ENCODE measurements at regions of chr17 and their contacts with region 1.

Region 1: DNA sequence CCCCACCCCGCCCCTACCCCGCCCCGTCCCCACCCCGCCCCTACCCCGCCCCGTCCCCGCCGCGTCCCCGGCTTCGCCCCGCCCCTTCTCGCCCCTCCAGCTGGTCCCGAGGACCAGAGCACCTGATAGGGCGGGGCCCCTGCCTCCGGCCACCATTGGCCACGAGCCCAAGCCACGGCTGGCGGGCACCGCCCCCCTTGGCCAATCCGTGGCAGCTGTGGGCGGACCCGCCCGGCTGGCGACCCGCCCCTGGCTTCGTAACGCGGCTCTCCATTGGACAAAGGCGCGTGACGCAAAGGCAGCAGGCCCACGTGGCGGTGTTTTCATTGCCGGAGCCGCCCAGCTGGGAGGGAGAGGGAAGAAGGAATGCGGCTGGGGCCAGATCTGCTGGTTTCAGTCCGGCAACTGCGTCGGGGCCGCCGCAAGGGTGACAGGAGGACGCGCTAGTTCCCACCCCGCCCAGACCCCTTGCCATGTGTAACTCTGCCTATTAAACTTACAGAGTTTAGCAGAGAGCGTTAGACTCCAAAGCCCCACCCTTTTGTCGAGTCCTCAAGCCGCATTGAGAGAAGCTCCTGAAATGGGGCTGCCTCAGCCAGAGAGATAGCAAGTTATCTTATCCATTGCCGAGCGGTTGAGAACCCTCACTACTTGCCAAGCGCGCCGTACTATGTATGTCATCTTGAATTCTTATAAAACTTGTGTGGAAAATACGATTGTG is 403 bp upstream of the WIPI1 start:
- DNase-seq: peak; percentile 97 to 99 (median 99)
- H3K4me3 ChIP-seq: peak overlapping the region; percentile 34 to 57
- H3K4me3 Mint-ChIP-seq: peak overlapping the region; percentile 76 to 92 (median 86)
- H3K27ac ChIP-seq: peak overlapping the region; percentile 64
- H3K27ac Mint-ChIP-seq: peak overlapping the region; percentile 85 to 97 (median 95)
- H3K4me1 ChIP-seq: peaks cover 60% of the 10 kb centered on the region
- H3K4me1 Mint-ChIP-seq: peaks cover 36 to 66% (median 49%) of the 10 kb centered on the region in 4 donors
- H3K27me3 ChIP-seq: no peaks in the 10 kb centered on the region
- H3K27me3 Mint-ChIP-seq: no peaks in the 10 kb centered on the region

Region 2: GRCh38 chr17:67717624-67718329 is 739.9 kb before region 1 on chr17 and contains the start of gene NOL11:
- CTCF ChIA-PET with region 1: no interaction called
- POLR2A ChIA-PET with region 1: no interaction called
- intact Hi-C with region 1: loop called (anchors 10 kb)
- DNase-seq: peak; percentile 99 to 100 (median 99)
- H3K4me3 ChIP-seq: peak within 1 kb of the TSS; percentile 89 to 100
- H3K4me3 Mint-ChIP-seq: peak within 1 kb of the TSS; percentile 98 to 100 (median 100)
- H3K27ac ChIP-seq: peak within 1 kb of the TSS; percentile 94
- H3K27ac Mint-ChIP-seq: peak within 1 kb of the TSS; percentile 97 to 100 (median 99)
- H3K4me1 ChIP-seq: peaks cover 28% of the 10 kb centered on the region
- H3K4me1 Mint-ChIP-seq: peaks cover 10 to 33% (median 19%) of the 10 kb centered on the region in 4 donors
- H3K27me3 ChIP-seq: no peaks in the 10 kb centered on the region
- H3K27me3 Mint-ChIP-seq: peaks cover 0 to 2% of the 10 kb centered on the region in 2 donors
- total RNA-seq, gene NOL11: 56.6 to 57.1 TPM

Region 3: DNA sequence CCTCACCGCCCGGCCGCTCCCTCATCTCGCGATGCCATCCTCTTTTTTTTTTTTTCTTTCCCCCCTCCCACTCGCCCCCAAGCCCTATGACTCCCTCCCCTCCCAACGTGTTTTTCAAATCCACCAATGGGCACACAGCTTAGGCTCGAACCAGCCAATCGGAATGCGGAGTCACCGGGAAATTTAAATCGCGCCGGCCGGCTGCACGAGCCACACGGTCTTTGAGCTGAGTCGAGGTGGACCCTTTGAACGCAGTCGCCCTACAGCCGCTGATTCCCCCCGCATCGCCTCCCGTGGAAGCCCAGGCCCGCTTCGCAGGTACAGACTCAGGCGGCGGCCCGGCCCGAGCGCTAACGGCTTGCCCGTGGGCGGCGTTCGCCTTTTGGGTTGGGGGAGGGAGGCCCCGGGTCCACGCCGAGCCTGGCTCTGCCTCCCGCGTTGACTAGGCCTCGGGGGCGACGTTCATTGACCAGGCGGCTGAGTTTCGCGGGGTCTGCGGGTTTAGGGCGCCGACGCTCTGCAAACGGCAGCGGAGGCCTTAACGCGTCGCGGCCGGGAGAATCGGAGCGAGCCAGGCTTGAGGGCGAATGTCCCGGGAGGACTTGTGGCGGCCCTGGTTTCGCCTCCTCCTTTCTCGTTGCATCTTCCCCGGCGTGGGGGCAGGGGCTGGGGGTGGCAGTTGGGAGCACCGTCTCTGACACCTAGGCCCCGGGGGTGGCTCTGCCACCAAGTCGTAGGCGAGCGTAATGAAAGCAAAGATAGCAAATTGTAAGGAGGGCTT is 422.0 kb before region 1 on chr17 and contains the start of gene KPNA2:
- CTCF ChIA-PET with region 1: interaction called, 3 read pairs
- POLR2A ChIA-PET with region 1: interaction called, 4 read pairs
- intact Hi-C with region 1: loop called (anchors 1 kb)
- DNase-seq: peak; percentile 92 to 96 (median 94)
- H3K4me3 ChIP-seq: peak within 1 kb of the TSS; percentile 43 to 91
- H3K4me3 Mint-ChIP-seq: peak within 1 kb of the TSS; percentile 87 to 98 (median 96)
- H3K27ac ChIP-seq: peak within 1 kb of the TSS; percentile 85
- H3K27ac Mint-ChIP-seq: peak within 1 kb of the TSS; percentile 89 to 98 (median 95)
- H3K4me1 ChIP-seq: peaks cover 19% of the 10 kb centered on the region
- H3K4me1 Mint-ChIP-seq: peaks cover 8 to 24% (median 13%) of the 10 kb centered on the region in 4 donors
- H3K27me3 ChIP-seq: no peaks in the 10 kb centered on the region
- H3K27me3 Mint-ChIP-seq: no peaks in the 10 kb centered on the region
- total RNA-seq, gene KPNA2: 12.6 to 14.7 TPM

Region 4: DNA sequence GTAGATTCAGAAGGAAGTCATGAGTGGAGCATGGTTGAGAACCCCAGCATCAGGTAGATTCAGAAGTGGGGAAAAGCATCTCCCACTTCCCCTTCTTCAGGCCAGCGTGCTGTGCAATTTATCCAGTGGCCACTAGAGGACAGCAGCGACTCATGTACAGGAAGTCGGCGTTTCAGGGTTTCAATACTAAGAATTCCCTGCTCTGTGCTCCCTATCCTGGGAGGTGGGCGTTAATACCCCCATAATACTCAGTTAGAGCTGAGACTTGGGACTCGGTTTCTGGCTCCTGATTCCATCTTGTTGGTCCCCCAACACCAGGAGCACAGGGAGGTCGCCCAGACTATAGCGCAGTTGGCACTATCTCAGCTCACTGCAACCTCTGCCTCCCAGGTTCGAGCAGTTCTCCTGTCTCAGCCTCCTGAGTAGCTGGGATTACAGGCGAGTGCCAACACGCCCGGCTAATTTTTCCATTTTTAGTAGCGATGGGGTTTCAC is 285.2 kb before region 1 on chr17:
- CTCF ChIA-PET with region 1: interaction called, 19 read pairs
- POLR2A ChIA-PET with region 1: interaction called, 3 read pairs
- intact Hi-C with region 1: no loop called
- DNase-seq: peak; percentile 67 to 78 (median 68)
- H3K4me3 ChIP-seq: no peak overlapping the region
- H3K4me3 Mint-ChIP-seq: no peak overlapping the region
- H3K27ac ChIP-seq: no peak overlapping the region
- H3K27ac Mint-ChIP-seq: no peak overlapping the region
- H3K4me1 ChIP-seq: peaks cover 3% of the 10 kb centered on the region
- H3K4me1 Mint-ChIP-seq: peaks cover 8 to 17% (median 10%) of the 10 kb centered on the region in 4 donors
- H3K27me3 ChIP-seq: no peaks in the 10 kb centered on the region
- H3K27me3 Mint-ChIP-seq: no peaks in the 10 kb centered on the region

Region 5: GRCh38 chr17:68205251-68205807 is 252.4 kb before region 1 on chr17:
- CTCF ChIA-PET with region 1: interaction called, 7 read pairs
- POLR2A ChIA-PET with region 1: interaction called, 20 read pairs
- intact Hi-C with region 1: loop called (anchors 10 kb)
- DNase-seq: peak; percentile 88 to 94 (median 89)
- H3K4me3 ChIP-seq: peak overlapping the region in 1 of 2 donors; percentile 65
- H3K4me3 Mint-ChIP-seq: peak overlapping the region; percentile 79 to 93 (median 89)
- H3K27ac ChIP-seq: peak overlapping the region; percentile 72
- H3K27ac Mint-ChIP-seq: peak overlapping the region; percentile 74 to 94 (median 92)
- H3K4me1 ChIP-seq: peaks cover 43% of the 10 kb centered on the region
- H3K4me1 Mint-ChIP-seq: peaks cover 20 to 49% (median 33%) of the 10 kb centered on the region in 4 donors
- H3K27me3 ChIP-seq: no peaks in the 10 kb centered on the region
- H3K27me3 Mint-ChIP-seq: no peaks in the 10 kb centered on the region

Region 6: GRCh38 chr17:68255731-68256538 is 201.8 kb before region 1 on chr17:
- CTCF ChIA-PET with region 1: interaction called, 3 read pairs
- POLR2A ChIA-PET with region 1: interaction called, 10 read pairs
- intact Hi-C with region 1: no loop called
- DNase-seq: peak; percentile 50 to 73 (median 60)
- H3K4me3 ChIP-seq: no peak overlapping the region
- H3K4me3 Mint-ChIP-seq: peak overlapping the region; percentile 46 to 73 (median 66)
- H3K27ac ChIP-seq: peak overlapping the region; percentile 88
- H3K27ac Mint-ChIP-seq: peak overlapping the region; percentile 81 to 99 (median 98)
- H3K4me1 ChIP-seq: peaks cover 86% of the 10 kb centered on the region
- H3K4me1 Mint-ChIP-seq: peaks cover 61 to 85% (median 72%) of the 10 kb centered on the region in 4 donors
- H3K27me3 ChIP-seq: no peaks in the 10 kb centered on the region
- H3K27me3 Mint-ChIP-seq: no peaks in the 10 kb centered on the region

Region 7: GRCh38 chr17:68435876-68436842 is 21.5 kb before region 1 on chr17:
- CTCF ChIA-PET with region 1: interaction called, 142 read pairs
- POLR2A ChIA-PET with region 1: interaction called, 107 read pairs
- intact Hi-C with region 1: loop called (anchors 1 kb)
- DNase-seq: peak; percentile 82 to 84 (median 83)
- H3K4me3 ChIP-seq: no peak overlapping the region
- H3K4me3 Mint-ChIP-seq: peak overlapping the region in 7 of 8 donors; percentile 36 to 91 (median 67)
- H3K27ac ChIP-seq: no peak overlapping the region
- H3K27ac Mint-ChIP-seq: peak overlapping the region; percentile 79 to 97 (median 88)
- H3K4me1 ChIP-seq: peaks cover 51% of the 10 kb centered on the region
- H3K4me1 Mint-ChIP-seq: peaks cover 37 to 60% (median 45%) of the 10 kb centered on the region in 4 donors
- H3K27me3 ChIP-seq: no peaks in the 10 kb centered on the region
- H3K27me3 Mint-ChIP-seq: no peaks in the 10 kb centered on the region

Measured in CD4-positive, alpha-beta memory T cell (primary cell).